HEK293 (cell line): ENCODE measurements at regions of chr2 and their contacts with region 1.

Region 1: GRCh38 chr2:54838585-54839035 is 115.1 kb downstream of the EML6 start:
- H3K4me3 ChIP-seq: no peak overlapping the region
- H3K27ac ChIP-seq: no peak overlapping the region
- H3K4me1 ChIP-seq: no peaks in the 10 kb centered on the region
- CTCF ChIP-seq: peak; percentile 72

Region 2: DNA sequence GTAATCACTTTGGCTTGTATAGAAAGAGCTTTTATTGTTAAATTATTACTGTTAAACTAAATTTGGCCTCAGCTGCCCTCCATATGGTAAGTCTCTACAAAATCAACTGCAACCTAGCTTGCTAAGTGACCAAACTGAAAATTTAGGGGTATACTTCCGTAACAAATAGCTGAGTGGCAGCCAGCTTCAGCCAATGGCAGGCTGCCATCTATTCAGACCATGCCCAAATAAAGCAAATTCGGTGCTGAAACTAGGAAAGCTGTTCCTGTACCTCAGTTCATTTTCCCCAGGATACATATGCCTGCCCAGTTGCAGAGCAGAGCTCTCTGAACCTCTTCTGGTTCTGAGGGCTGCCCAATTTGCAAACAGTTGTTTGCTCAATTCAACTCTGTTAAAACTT is 20.4 kb before region 1 on chr2:
- CTCF ChIA-PET with region 1: interaction called, 10 read pairs
- POLR2A ChIA-PET with region 1: no interaction called
- H3K4me3 ChIP-seq: no peak overlapping the region
- H3K27ac ChIP-seq: no peak overlapping the region
- H3K4me1 ChIP-seq: no peaks in the 10 kb centered on the region
- CTCF ChIP-seq: no peak

Region 3: DNA sequence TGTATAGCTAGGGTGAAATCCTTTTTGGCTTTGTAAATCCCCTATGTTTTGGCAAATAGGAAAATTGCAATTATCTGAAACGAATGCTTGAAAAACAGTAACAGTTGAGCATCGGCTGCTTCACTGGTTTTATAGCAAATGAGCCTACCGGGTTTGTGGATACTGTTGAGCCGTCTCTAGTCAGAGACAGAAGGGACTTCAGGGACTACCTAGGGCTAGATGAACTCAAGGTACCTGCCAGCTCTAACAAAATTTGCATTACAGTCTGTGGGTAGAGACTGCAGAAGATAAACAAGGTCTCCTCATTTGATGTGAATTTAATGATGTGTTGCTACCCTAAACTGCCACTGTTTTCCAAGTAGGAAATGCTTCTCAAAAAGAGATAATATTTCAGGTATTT is 14.0 kb before region 1 on chr2:
- CTCF ChIA-PET with region 1: interaction called, 16 read pairs
- POLR2A ChIA-PET with region 1: no interaction called
- H3K4me3 ChIP-seq: no peak overlapping the region
- H3K27ac ChIP-seq: no peak overlapping the region
- H3K4me1 ChIP-seq: no peaks in the 10 kb centered on the region
- CTCF ChIP-seq: no peak

Region 4: GRCh38 chr2:55003706-55004639 is 165.4 kb after region 1 on chr2:
- CTCF ChIA-PET with region 1: no interaction called
- POLR2A ChIA-PET with region 1: no interaction called
- H3K4me3 ChIP-seq: no peak overlapping the region
- H3K27ac ChIP-seq: no peak overlapping the region
- H3K4me1 ChIP-seq: peaks cover 27% of the 10 kb centered on the region
- CTCF ChIP-seq: no peak